ENCODE measurements at regions of chr7 and their contacts with region 1.

Region 1: DNA sequence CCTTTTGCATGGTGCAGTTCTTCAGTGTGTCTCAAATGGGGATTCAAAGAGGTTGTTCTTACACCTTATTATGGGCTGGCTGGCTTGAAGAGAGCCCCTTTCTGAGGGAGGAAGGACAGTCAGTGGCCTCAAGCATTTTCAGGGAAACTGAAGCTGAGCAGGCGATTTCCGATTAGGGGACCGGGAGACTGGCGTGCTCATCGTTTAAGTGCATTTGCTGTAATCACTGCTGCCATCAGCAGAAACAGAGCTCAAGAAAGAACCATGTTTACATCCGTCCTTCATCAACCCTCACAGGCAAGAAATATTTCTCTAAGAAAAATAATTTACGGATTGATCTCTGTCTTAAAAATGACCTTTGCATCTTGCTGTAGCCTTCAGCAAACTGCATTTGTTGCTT is 32.2 kb downstream of the DNAJB6 start:
- H3K4me3 ChIP-seq: no peak overlapping the region
- H3K27ac ChIP-seq: no peak overlapping the region
- H3K4me1 ChIP-seq: no peaks in the 10 kb centered on the region
- CTCF ChIP-seq: no peak

Region 2: DNA sequence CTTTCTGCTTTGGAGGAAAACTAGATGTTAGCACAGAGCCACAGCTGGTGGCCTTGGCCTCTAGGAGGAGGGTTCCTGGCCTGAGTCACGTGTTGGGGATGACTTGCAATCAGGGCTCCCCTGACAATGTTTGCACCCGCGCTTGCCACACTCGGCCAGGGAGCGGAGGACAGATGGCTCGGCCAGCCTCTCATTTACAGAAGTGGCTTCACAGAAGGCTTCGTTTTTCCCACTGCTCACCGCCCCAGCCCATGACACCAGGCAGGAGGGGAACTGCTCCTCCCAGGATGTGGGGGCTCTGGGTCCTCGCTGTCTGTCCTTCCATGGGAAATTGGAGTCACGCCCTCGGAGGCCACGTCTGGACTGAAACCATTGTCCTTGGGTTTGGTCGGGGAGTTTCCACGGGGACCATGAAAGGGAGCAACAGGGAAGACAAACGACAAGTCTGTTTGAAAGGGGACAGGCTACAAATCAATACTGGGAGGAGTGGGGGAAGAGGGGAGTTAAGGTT is 279.8 kb before region 1 on chr7:
- CTCF ChIA-PET with region 1: no interaction called
- POLR2A ChIA-PET with region 1: no interaction called
- H3K4me3 ChIP-seq: no peak overlapping the region
- H3K27ac ChIP-seq: no peak overlapping the region
- H3K4me1 ChIP-seq: no peaks in the 10 kb centered on the region
- CTCF ChIP-seq: no peak

Region 3: GRCh38 chr7:157386979-157387800 is 18.2 kb after region 1 on chr7:
- CTCF ChIA-PET with region 1: interaction called, 20 read pairs
- POLR2A ChIA-PET with region 1: no interaction called
- H3K4me3 ChIP-seq: no peak overlapping the region
- H3K27ac ChIP-seq: no peak overlapping the region
- H3K4me1 ChIP-seq: no peaks in the 10 kb centered on the region
- CTCF ChIP-seq: peak; percentile 81